ENCODE measurements at regions of chr1 and their contacts with region 1.

Region 1: GRCh38 chr1:153532769-153533599 is 2.8 kb downstream of the S100A6 start:
- DNase-seq: peak; percentile 87
- ATAC-seq: peak; percentile 21
- H3K4me3 ChIP-seq: peak overlapping the region; percentile 28; the same call in 1 of the 2 replicates
- H3K27ac ChIP-seq: peak overlapping the region; percentile 94
- H3K4me1 ChIP-seq: peaks cover 46% of the 10 kb centered on the region
- H3K27me3 ChIP-seq: no peaks in the 10 kb centered on the region
- CTCF ChIP-seq: peak; percentile 96

Region 2: DNA sequence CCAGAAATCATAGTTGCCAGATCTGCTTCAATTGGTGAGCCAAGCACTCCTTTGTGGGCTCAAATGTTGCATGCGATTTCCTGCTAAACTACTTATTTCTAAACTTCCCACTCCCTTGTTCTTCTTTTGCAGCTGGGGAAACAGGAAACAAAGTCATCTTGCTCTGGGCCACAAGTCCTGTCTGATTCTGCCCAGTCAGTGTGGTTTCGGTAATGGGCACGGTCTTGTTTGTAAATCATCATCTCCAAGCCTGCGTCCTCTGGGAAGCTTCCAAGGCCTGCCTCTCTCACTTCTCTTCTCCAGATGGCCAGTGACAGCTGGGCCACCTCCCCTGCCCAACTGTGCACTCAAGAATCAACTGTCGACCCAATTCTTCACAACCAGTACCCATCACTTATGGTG is 146.5 kb before region 1 on chr1:
- CTCF ChIA-PET with region 1: no interaction called
- POLR2A ChIA-PET with region 1: no interaction called
- intact Hi-C with region 1: no loop called
- DNase-seq: no peak
- ATAC-seq: no peak
- H3K4me3 ChIP-seq: no peak overlapping the region
- H3K27ac ChIP-seq: no peak overlapping the region
- H3K4me1 ChIP-seq: peaks cover 14% of the 10 kb centered on the region
- H3K27me3 ChIP-seq: peaks cover 10% of the 10 kb centered on the region; the same call in 1 of the 2 replicates
- CTCF ChIP-seq: no peak

Region 3: DNA sequence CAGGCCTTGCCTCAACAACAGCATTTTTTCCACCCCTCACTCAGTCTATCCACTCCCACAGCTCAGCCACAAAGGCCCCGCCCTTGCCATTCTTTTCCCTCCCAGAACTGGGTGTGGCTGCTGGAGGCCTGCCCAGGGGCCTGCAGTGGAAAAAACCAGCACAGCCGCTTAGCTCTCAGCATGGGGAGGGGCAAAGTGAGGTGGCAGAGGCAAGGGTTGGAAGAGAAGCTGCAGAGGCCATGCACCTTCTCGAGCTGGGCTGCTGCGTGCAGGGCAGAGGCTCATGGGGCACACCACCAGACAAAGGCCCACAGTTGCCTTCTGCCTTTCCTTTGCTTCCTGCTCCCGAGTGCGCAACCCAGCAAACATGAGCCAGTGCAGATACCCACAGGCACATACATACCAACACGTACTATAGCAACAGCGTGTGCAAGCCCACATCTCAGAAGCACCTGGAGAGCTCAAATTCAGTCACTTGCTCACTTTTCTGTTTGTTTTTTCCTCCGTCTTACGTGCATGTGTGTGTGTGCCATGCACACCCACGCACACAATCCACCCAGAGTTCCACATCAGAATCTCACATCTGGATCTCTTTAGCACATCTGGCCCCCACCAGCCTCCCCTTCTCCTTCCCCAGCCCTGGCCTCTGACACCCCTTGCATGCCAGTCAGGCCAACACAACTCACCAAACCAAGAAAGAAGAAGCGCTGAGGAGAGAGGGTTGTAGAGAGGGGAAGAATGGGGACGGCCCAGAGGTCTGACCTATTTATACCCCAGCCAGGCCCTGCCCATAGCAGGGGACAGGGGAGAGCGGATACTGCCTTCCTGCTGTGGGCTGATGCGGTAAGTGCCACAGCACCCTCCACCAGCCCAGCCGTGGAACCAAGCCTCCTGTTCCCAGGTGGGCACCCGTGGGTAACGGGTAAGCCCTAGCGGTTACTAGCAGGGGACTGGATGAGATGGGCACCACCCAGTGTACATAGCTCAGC is 12.4 kb after region 1 on chr1 and contains the start of gene S100A4:
- CTCF ChIA-PET with region 1: interaction called, 3 read pairs
- POLR2A ChIA-PET with region 1: interaction called, 3 read pairs
- intact Hi-C with region 1: loop called (anchors 1 kb)
- DNase-seq: peak; percentile 99
- ATAC-seq: peak; percentile 64
- H3K4me3 ChIP-seq: peak within 1 kb of the TSS; percentile 8; the same call in 1 of the 2 replicates
- H3K27ac ChIP-seq: peak within 1 kb of the TSS; percentile 82
- H3K4me1 ChIP-seq: peaks cover 69% of the 10 kb centered on the region
- H3K27me3 ChIP-seq: no peaks in the 10 kb centered on the region
- CTCF ChIP-seq: no peak
- total RNA-seq, gene S100A4: 32.2 and 55.8 TPM in 2 replicates

Region 4: DNA sequence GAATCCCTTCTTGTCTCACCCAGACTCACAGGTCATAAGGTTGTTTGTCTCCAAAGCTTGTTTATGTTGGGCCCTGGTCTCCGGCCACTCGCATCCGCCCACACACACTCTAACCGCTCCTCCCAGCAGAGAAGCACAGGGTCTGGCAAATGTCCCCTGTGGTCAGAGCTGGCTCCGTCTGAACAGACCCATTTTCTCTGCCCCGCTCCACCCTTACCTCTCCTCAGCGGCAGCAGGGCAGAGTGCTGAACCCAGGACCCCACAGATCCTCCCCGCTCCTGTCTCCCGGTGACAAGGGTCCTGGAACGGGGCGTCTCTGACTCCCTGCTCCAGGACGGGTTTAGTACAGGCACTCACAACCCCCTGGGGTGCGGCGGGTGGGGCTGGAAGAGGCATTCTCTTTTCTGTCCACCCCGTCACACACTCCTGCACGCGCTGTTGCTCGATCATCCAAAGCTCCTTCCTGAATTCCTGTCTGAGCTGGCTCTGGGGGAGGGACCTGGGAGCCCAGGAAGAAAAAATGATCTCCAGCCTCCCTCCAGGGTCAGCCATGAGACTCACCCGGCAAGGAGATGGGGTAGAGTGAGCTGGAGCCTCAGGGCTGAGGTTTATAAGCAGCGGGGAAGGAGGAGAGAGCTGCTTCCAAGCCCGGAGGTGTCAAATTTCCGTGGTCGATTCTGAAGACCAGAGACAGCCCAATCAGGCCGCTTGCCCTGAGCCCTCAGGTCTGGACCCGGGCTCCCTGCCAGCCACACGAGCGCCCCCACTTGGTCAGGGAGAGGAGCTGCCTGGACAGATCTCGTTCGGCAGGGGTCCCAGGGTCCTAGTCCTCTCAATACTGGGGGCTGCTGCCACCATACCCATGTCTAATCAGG is 94.2 kb after region 1 on chr1 and contains the start of gene S100A13:
- CTCF ChIA-PET with region 1: interaction called, 3 read pairs
- POLR2A ChIA-PET with region 1: interaction called, 12 read pairs
- intact Hi-C with region 1: no loop called
- DNase-seq: peak; percentile 97
- ATAC-seq: peak; percentile 88
- H3K4me3 ChIP-seq: peak within 1 kb of the TSS; percentile 84
- H3K27ac ChIP-seq: peak within 1 kb of the TSS; percentile 79
- H3K4me1 ChIP-seq: peaks cover 33% of the 10 kb centered on the region
- H3K27me3 ChIP-seq: no peaks in the 10 kb centered on the region
- CTCF ChIP-seq: peak; percentile 95
- total RNA-seq, gene S100A13: 307 and 350 TPM in 2 replicates

Region 5: DNA sequence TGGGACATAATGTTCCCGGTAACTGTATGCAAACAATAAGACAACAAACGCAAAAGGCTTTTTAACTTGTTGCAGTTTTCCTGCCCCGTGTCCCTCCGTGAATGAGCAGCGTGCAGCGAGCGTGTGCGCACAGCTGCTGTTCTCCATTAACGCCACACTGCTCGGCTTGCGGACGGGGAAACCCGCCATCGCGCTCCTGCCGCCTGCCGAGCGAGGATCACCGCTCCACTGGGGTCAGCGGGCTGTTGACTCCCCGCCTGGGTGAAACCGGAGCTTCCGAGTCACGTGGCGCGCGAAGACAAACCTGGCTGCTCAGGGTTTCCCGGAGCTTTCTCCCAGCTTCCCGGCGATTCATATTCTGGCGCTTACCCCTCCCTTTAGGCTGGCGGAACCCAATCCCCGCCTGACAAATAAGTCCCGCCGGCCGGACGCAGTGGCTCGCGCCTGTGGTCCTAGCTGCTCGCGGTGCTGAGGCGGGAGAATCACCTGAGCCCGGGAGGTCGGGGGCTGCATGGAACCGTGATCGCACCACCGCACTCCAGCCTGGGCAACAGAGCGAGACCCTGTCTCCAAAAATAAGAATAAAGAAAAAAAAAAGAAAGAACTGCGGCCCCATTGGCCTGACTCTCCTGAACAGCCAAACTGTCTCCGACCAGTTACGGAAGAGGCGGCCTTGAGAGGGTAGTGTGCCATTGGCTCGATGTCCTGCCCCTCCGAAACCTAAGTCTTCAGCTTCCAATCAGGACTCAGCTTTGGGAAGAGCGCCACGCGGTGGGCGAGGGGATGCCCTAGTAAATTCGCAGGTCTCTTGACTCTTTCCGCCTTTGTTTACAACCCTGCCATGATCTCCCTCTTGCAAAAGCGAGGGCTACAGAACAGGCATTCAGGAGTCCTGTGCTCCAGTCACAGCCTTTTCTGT is 434.4 kb after region 1 on chr1 and contains the start of gene CREB3L4:
- CTCF ChIA-PET with region 1: no interaction called
- POLR2A ChIA-PET with region 1: interaction called, 13 read pairs
- intact Hi-C with region 1: no loop called
- DNase-seq: peak; percentile 98
- ATAC-seq: peak; percentile 68
- H3K4me3 ChIP-seq: peak within 1 kb of the TSS; percentile 71
- H3K27ac ChIP-seq: peak within 1 kb of the TSS; percentile 81
- H3K4me1 ChIP-seq: peaks cover 31% of the 10 kb centered on the region
- H3K27me3 ChIP-seq: no peaks in the 10 kb centered on the region
- CTCF ChIP-seq: peak; percentile 55
- total RNA-seq, gene CREB3L4: 22.9 and 28.7 TPM in 2 replicates

Measured in PC-3 (cell line).